IMR-90 (cell line): ENCODE measurements at regions of chr3 and their contacts with region 1.

Region 1: DNA sequence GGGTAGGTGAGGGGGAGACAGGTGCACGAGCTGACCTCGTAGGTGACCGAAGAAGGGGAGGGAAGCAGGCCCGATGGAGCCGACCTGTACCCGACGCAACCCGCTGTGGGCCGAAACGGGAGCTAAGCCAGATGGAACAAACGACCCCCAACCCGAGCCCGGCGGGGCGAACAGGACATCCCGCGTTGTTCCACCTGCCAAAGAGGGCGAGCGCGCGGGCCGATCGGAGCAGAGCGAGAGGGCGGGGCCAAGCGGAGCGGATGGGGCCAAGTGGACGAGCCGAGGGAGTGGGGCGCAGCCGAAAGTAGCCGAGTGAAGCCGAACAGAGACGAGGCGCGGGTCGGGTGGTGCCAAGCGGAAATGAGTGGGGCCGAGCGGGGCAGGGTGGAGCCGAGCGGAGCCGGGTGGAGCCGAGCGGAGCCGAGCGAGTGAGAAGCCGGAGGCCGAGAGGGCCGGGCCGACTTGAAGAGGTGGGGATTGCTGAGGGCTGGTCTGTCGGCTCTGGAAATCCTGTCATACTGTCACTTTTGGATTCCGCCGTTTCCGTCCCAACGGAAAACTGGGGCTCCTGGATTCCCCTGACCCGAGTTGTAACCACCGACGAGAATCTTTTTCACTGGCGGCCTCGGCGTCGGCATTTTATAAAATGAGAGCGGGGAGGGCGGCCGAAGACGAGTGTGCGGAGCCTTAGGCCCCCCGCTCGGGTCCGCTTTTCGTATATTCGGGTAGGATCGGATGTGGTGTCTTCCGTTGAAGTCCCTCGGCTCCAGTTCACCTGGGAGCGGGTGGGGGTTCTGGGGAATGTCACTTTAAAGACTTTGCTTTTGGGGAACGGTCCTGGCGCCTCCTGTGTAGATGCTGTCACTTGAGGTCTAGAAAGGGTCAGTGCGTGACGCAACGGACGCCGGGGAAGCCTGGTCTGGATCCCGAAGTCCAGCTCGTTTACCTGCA is 15.6 kb upstream of the WNT7A start:
- DNase-seq: peak; percentile 71
- ATAC-seq: peak; percentile 100
- H3K4me3 ChIP-seq: peak overlapping the region; percentile 78
- H3K27ac ChIP-seq: peak overlapping the region; percentile 60; the same call in 1 of the 2 replicates
- H3K4me1 ChIP-seq: peaks cover 7% of the 10 kb centered on the region
- H3K27me3 ChIP-seq: peaks cover 10% of the 10 kb centered on the region; the same call in 1 of the 2 replicates
- CTCF ChIP-seq: no peak
- POLR2A ChIP-seq: no peak
- RAD21 ChIP-seq: no peak

Region 2: DNA sequence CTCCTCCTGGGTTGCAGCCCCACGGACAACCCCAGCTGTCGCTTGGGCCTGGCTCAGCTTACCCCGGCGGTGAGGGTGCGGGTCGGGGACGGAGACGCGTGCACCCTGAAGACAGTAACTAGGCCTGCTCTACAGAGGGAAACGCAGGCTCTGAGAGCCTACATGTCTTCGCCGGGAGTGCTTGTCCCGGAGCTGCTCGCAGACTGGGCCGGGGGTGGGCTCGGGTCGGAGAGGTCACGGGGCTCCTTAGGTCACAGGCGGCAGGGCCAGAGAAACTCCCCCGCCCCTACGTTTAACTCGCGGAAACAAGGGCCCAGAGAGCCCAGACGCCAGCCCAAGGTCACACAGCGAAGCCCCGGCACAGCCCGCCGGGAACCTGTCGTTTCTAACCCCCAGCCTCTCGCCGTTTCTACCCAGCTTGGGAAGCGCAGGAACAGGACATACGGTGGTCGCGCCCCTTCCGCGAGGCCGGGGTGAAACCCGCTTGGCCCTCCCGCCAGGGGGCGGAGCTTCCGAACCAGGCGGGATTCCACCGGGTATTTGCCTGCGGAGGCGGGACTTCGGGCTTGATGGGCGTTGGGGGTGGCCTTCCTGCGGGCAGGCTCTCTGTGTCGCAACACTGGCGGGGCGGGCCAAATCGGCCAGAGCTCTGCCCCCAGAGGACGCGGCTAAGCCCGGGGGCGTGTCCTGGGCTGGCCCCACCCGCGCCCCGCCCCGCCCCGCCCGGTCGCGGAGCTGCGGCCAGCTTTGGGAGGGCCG is 415.7 kb before region 1 on chr3 and contains the start of gene HDAC11:
- CTCF ChIA-PET with region 1: no interaction called
- POLR2A ChIA-PET with region 1: no interaction called
- dilution Hi-C with region 1: no loop called
- in situ Hi-C with region 1: loop called (anchors 25 kb)
- intact Hi-C with region 1: no loop called
- DNase-seq: peak; percentile 95
- ATAC-seq: peak; percentile 98
- H3K4me3 ChIP-seq: peak within 1 kb of the TSS; percentile 75
- H3K27ac ChIP-seq: peak within 1 kb of the TSS; percentile 69
- H3K4me1 ChIP-seq: peaks cover 6% of the 10 kb centered on the region; the same call in 1 of the 2 replicates
- H3K27me3 ChIP-seq: no peaks in the 10 kb centered on the region
- CTCF ChIP-seq: peak; percentile 18; the same call in 1 of the 2 replicates
- POLR2A ChIP-seq: no peak
- RAD21 ChIP-seq: no peak
- total RNA-seq, gene HDAC11: 6.1 and 9.1 TPM in 2 replicates

Region 3: DNA sequence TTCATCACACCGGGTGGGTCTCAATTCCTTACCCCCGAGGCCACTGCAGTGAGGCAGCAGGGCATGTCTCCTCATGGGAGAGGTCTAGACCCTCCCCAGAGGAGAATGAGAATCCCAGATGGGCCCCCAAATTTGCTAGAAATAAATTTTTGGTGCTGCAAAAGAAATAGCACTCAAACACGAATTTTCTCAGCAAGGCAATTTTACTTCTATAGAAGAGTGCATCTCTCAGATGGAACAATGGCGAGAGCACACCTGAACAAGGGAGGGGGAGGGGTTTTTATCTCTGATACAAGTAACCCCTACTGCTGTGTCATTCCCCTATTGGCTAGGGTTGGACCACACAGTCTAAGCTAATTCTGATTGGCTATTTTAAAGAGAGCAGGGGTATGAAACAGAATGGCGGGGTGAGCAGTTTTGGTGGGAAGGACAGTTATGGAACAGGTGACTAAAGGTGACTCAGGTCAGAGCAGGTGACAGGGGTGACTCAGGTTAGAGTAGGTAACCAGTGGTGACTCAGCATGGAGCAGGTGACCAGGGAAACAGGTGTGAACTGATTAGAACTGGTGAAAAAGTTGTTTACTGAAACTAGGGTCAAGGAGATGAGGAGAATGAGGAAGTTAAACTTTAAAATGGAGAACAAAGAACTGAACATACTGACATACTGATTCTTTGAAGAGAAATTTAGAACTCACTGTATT is 77.4 kb after region 1 on chr3:
- CTCF ChIA-PET with region 1: no interaction called
- POLR2A ChIA-PET with region 1: no interaction called
- dilution Hi-C with region 1: no loop called
- in situ Hi-C with region 1: no loop called
- intact Hi-C with region 1: no loop called
- DNase-seq: no peak
- ATAC-seq: no peak
- H3K4me3 ChIP-seq: no peak overlapping the region
- H3K27ac ChIP-seq: no peak overlapping the region
- H3K4me1 ChIP-seq: no peaks in the 10 kb centered on the region
- H3K27me3 ChIP-seq: no peaks in the 10 kb centered on the region
- CTCF ChIP-seq: no peak
- POLR2A ChIP-seq: no peak
- RAD21 ChIP-seq: no peak

Region 4: DNA sequence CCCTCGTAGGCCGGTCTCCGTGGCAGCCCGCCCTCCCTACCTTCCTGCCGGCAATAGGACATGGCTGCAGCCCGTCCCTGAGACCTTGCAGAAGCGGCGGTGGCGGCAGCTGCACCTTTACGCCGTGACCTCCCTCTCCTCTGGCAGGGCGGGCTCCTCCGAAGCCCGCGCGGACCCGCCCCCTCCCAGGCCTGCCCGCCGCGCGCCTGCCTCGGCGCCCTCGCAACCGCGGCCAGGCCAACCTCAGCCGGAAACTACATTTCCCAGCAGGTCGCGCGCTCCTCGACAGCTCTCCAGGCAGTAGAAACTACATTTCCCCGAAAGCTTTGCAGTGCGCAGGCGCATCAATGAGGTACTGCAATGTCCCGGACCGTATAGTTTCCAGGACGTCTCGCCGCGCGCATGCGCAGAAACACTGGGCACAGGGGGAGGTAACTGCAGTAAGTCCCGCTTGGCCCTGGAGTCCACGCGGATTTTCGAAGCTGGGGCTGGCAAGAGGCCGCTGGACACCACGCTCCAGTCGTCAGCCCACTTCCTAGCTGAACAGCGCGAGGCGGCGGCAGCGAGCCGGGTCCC is 229.3 kb after region 1 on chr3 and contains the starts of genes CHCHD4 and TMEM43:
- CTCF ChIA-PET with region 1: no interaction called
- POLR2A ChIA-PET with region 1: no interaction called
- dilution Hi-C with region 1: no loop called
- in situ Hi-C with region 1: loop called (anchors 25 kb)
- intact Hi-C with region 1: loop called (anchors 2 kb)
- DNase-seq: peak; percentile 99
- ATAC-seq: peak; percentile 84
- H3K4me3 ChIP-seq: peak within 1 kb of the TSS; percentile 64
- H3K27ac ChIP-seq: peak within 1 kb of the TSS; percentile 77
- H3K4me1 ChIP-seq: peaks cover 15% of the 10 kb centered on the region
- H3K27me3 ChIP-seq: no peaks in the 10 kb centered on the region
- CTCF ChIP-seq: no peak
- POLR2A ChIP-seq: peak; percentile 93
- RAD21 ChIP-seq: no peak
- total RNA-seq, gene CHCHD4: 9.0 and 12.2 TPM in 2 replicates
- total RNA-seq, gene TMEM43: 103 and 114 TPM in 2 replicates

Region 5: GRCh38 chr3:14178247-14179113 is 283.1 kb after region 1 on chr3 and contains the starts of genes LSM3 and XPC:
- CTCF ChIA-PET with region 1: no interaction called
- POLR2A ChIA-PET with region 1: no interaction called
- dilution Hi-C with region 1: no loop called
- in situ Hi-C with region 1: no loop called
- intact Hi-C with region 1: loop called (anchors 5 kb)
- DNase-seq: peak; percentile 99
- ATAC-seq: peak; percentile 99
- H3K4me3 ChIP-seq: peak within 1 kb of the TSS; percentile 72
- H3K27ac ChIP-seq: peak within 1 kb of the TSS; percentile 89
- H3K4me1 ChIP-seq: peaks cover 3% of the 10 kb centered on the region
- H3K27me3 ChIP-seq: no peaks in the 10 kb centered on the region
- CTCF ChIP-seq: no peak
- POLR2A ChIP-seq: peak; percentile 96
- RAD21 ChIP-seq: no peak
- total RNA-seq, gene LSM3: 3.4 and 14.2 TPM in 2 replicates
- total RNA-seq, gene XPC: 40.5 and 48.8 TPM in 2 replicates

Region 6: GRCh38 chr3:14261229-14261628 is 365.8 kb after region 1 on chr3:
- CTCF ChIA-PET with region 1: no interaction called
- POLR2A ChIA-PET with region 1: no interaction called
- dilution Hi-C with region 1: no loop called
- in situ Hi-C with region 1: no loop called
- intact Hi-C with region 1: loop called (anchors 2 kb)
- DNase-seq: peak; percentile 77
- ATAC-seq: peak; percentile 75
- H3K4me3 ChIP-seq: no peak overlapping the region
- H3K27ac ChIP-seq: no peak overlapping the region
- H3K4me1 ChIP-seq: peaks cover 21% of the 10 kb centered on the region
- H3K27me3 ChIP-seq: no peaks in the 10 kb centered on the region
- CTCF ChIP-seq: peak; percentile 97
- POLR2A ChIP-seq: 0 out of 2 replicates have a peak, but pooled peaks have one; percentile 44
- RAD21 ChIP-seq: peak; percentile 97

Region 7: DNA sequence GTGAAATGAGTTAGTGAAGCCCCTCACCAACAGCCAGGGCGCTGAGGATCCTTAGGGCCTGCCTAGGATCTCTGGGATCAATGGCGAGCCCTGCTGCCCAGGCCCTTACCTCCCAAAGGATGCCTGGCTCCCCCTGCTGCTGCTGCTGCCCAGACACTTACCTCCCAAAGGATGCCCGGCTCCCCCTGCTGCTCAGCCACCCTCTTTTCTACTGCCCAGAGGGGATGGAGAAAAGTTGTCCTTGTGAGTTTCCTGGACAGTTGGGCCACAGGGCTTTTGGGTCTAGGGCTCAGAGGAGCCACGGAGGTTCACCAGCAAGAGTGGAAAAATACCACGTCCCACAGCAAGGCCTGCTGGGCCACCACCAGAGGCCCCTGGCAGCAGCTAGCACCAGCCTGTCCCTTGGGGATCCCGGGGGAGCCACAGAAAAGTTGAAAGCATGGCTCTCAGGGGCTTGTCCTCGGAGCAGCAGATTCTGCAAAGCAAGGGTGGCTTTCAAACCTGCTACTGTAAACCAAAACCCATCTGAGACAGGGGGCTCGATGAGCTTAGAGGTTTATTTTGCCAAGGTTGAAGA is 566.4 kb after region 1 on chr3:
- CTCF ChIA-PET with region 1: no interaction called
- POLR2A ChIA-PET with region 1: no interaction called
- dilution Hi-C with region 1: no loop called
- in situ Hi-C with region 1: loop called (anchors 10 kb)
- intact Hi-C with region 1: loop called (anchors 2 kb)
- DNase-seq: peak; percentile 73
- ATAC-seq: peak; percentile 61
- H3K4me3 ChIP-seq: no peak overlapping the region
- H3K27ac ChIP-seq: peak overlapping the region; percentile 21; the same call in 1 of the 2 replicates
- H3K4me1 ChIP-seq: peaks cover 11% of the 10 kb centered on the region; the same call in 1 of the 2 replicates
- H3K27me3 ChIP-seq: no peaks in the 10 kb centered on the region
- CTCF ChIP-seq: peak; percentile 98
- POLR2A ChIP-seq: no peak
- RAD21 ChIP-seq: peak; percentile 88

Region 8: GRCh38 chr3:14565868-14566588 is 670.6 kb after region 1 on chr3:
- CTCF ChIA-PET with region 1: no interaction called
- POLR2A ChIA-PET with region 1: no interaction called
- dilution Hi-C with region 1: no loop called
- in situ Hi-C with region 1: loop called (anchors 25 kb)
- intact Hi-C with region 1: no loop called
- DNase-seq: peak; percentile 26
- ATAC-seq: no peak
- H3K4me3 ChIP-seq: no peak overlapping the region
- H3K27ac ChIP-seq: no peak overlapping the region
- H3K4me1 ChIP-seq: no peaks in the 10 kb centered on the region
- H3K27me3 ChIP-seq: peaks cover 49% of the 10 kb centered on the region
- CTCF ChIP-seq: no peak
- POLR2A ChIP-seq: no peak
- RAD21 ChIP-seq: no peak